Gastrocnemius medialis (tissue), 4 donors: ENCODE measurements at regions of chr19 and their contacts with region 1.

Region 1: GRCh38 chr19:47697863-47698609 is 15.2 kb upstream of the EHD2 start:
- DNase-seq: peak; percentile 64 to 80
- ATAC-seq: peak; percentile 74 to 91
- H3K4me3 ChIP-seq: no peak overlapping the region
- H3K27ac ChIP-seq: peak overlapping the region; percentile 78 to 85 (median 80)
- H3K4me1 ChIP-seq: peaks cover 4% of the 10 kb centered on the region in 2 donors
- H3K27me3 ChIP-seq: no peaks in the 10 kb centered on the region
- CTCF ChIP-seq: peak; percentile 96 to 98 (median 98)
- POLR2A ChIP-seq: no peak

Region 2: DNA sequence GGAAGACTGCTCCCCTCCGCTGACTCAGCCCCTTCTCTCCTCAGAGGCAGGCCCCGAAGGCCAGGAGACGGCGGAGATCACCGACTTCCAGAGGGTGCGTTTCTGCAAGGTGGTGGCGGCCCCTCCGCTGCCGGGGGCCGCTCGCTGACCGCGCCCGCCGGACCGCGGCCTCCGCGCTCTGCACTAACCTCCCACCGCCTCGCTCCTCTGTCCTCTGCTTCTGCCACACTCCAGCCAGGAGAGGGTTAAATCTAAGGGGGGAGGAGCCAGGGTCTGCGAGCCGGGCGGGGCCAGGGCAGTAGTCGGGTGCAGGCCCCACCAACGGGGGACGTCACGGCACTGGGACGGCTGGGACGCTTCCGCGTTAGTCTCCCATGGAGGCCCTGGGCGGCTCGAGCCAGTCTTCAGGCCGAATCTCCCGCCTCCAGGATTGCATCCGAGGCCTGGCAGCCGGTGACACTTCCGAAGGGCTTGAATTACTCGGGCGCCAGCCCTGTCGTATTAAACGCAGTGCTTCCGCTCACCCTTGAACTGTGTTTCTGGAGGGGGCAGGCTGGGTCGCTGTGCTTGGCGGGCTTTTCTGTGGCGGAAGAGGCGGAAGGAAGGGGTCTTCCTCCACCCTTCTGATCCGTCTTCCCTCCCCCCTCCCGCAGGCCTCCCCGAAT is 424.6 kb before region 1 on chr19:
- in situ Hi-C with region 1: no loop called
- intact Hi-C with region 1: loop called (anchors 10 kb)
- DNase-seq: peak; percentile 77 to 81
- ATAC-seq: peak; percentile 45 to 55
- H3K4me3 ChIP-seq: peak overlapping the region; percentile 60 to 74 (median 70)
- H3K27ac ChIP-seq: peak overlapping the region; percentile 88 to 95 (median 92)
- H3K4me1 ChIP-seq: peaks cover 15 to 35% of the 10 kb centered on the region in 2 donors
- H3K27me3 ChIP-seq: no peaks in the 10 kb centered on the region
- CTCF ChIP-seq: no peak
- POLR2A ChIP-seq: peak; percentile 55 to 70

Region 3: DNA sequence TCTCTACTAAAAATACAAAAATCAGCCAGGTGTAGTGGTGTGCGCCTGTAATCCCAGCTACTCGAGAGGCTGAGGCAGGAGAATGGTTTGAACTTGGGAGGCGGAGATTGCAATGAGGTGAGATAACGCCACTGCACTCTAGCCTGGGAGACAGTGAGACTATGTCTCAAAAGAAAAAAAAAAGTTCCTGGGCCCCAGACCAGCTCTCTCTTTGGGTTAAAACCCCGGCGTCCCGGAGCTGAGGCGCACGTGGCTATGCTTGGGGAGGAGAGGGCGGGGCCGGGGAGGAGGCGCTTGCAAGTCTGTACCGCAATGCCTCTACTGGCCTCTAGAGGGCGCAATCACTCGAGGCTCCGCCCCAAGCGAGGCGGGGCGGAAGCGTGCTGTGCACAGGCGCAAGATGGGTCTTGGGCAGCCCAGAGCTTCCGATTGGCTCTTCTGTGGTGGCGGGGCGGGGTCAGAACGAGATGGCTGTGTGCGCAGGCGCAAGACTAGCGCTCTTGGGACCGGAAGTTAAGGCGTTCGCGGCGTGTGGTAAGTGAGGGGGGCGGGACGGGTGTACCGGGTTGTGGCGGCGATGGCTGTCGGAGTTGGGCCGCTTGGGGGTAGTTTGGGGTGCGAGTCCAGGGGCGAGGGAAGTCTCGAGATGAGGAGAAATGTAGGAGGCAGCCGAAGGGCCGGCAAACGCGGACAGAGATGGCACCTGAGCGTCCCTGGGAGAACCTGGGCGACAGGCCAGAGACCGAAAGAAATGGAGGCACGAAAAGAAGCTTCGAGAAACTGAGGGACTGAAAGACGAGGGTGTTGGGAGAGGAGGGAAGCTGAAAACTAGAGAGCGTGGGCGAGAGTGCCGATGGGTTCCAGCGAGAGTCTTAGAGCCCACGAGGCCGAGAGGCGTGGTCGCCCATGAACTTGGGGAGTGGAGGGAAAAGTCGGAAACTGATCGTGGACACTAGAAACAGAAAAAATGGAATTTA is 348.9 kb before region 1 on chr19 and contains the start of gene DHX34:
- in situ Hi-C with region 1: no loop called
- intact Hi-C with region 1: loop called (anchors 5 kb)
- DNase-seq: peak; percentile 96 to 99
- ATAC-seq: peak; percentile 100
- H3K4me3 ChIP-seq: peak within 1 kb of the TSS; percentile 64 to 94 (median 82)
- H3K27ac ChIP-seq: peak within 1 kb of the TSS; percentile 79 to 82 (median 80)
- H3K4me1 ChIP-seq: peaks cover 10 to 18% of the 10 kb centered on the region in 2 donors
- H3K27me3 ChIP-seq: no peaks in the 10 kb centered on the region
- CTCF ChIP-seq: peak; percentile 97 to 100 (median 99)
- POLR2A ChIP-seq: peak; percentile 67 to 78
- total RNA-seq, gene DHX34: 14.3 to 19.3 (median 14.7) TPM

Region 4: GRCh38 chr19:47436712-47437401 is 261.2 kb before region 1 on chr19:
- in situ Hi-C with region 1: no loop called
- intact Hi-C with region 1: loop called (anchors 1 kb)
- DNase-seq: peak; percentile 51 to 74
- ATAC-seq: peak; percentile 92 to 96
- H3K4me3 ChIP-seq: no peak overlapping the region
- H3K27ac ChIP-seq: no peak overlapping the region
- H3K4me1 ChIP-seq: no peaks in the 10 kb centered on the region
- H3K27me3 ChIP-seq: peaks cover 15 to 34% (median 26%) of the 10 kb centered on the region in 3 donors
- CTCF ChIP-seq: peak; percentile 85 to 96 (median 93)
- POLR2A ChIP-seq: no peak

Region 5: DNA sequence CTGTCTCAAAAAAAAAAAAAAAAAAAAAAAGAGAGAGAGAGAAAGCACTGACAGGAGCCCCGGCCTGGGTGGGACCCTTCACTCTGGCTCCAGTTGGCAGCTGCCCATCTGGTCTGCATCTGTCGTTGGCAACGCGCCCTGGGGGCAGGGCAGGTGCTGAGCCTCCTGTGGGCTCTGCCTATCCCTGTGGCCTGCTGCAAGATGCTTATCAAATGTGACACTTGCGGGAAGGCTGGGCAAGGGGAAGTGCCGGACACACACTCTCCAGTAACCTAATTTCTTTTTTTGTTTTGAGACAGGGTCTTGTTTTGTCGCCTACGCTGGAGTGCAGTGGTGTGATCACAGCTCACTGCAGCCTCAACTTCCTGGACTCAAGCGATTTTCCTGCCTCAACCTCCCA is 203.3 kb before region 1 on chr19:
- in situ Hi-C with region 1: no loop called
- intact Hi-C with region 1: loop called (anchors 5 kb)
- DNase-seq: no peak
- ATAC-seq: no peak
- H3K4me3 ChIP-seq: no peak overlapping the region
- H3K27ac ChIP-seq: no peak overlapping the region
- H3K4me1 ChIP-seq: peaks cover 14 to 29% of the 10 kb centered on the region in 2 donors
- H3K27me3 ChIP-seq: no peaks in the 10 kb centered on the region
- CTCF ChIP-seq: no peak
- POLR2A ChIP-seq: no peak

Region 6: GRCh38 chr19:47600246-47601179 is 97.5 kb before region 1 on chr19:
- in situ Hi-C with region 1: loop called (anchors 5 to 10 kb)
- intact Hi-C with region 1: loop called (anchors 1 kb)
- DNase-seq: peak; percentile 99 to 100
- ATAC-seq: peak; percentile 96 to 97
- H3K4me3 ChIP-seq: peak overlapping the region; percentile 62 to 68 (median 63)
- H3K27ac ChIP-seq: peak overlapping the region; percentile 89 to 94 (median 92)
- H3K4me1 ChIP-seq: peaks cover 22 to 24% of the 10 kb centered on the region in 2 donors
- H3K27me3 ChIP-seq: no peaks in the 10 kb centered on the region
- CTCF ChIP-seq: peak in 2 of 5 experiments; percentile 10 to 34
- POLR2A ChIP-seq: peak; percentile 90 to 97

Region 7: GRCh38 chr19:47745010-47745901 is 47.2 kb after region 1 on chr19 and contains the start of gene NOP53:
- in situ Hi-C with region 1: no loop called
- intact Hi-C with region 1: loop called (anchors 1 kb)
- DNase-seq: peak; percentile 95 to 97
- ATAC-seq: peak; percentile 94
- H3K4me3 ChIP-seq: peak within 1 kb of the TSS; percentile 77 to 99 (median 92)
- H3K27ac ChIP-seq: peak within 1 kb of the TSS; percentile 92 to 99 (median 98)
- H3K4me1 ChIP-seq: peaks cover 22 to 33% of the 10 kb centered on the region in 2 donors
- H3K27me3 ChIP-seq: no peaks in the 10 kb centered on the region
- CTCF ChIP-seq: peak in 1 of 5 experiments; percentile 21
- POLR2A ChIP-seq: peak; percentile 77 to 79
- total RNA-seq, gene NOP53: 141 to 262 (median 150) TPM

Region 8: GRCh38 chr19:47891923-47892666 is 194.1 kb after region 1 on chr19:
- in situ Hi-C with region 1: no loop called
- intact Hi-C with region 1: no loop called
- DNase-seq: no peak
- ATAC-seq: no peak
- H3K4me3 ChIP-seq: no peak overlapping the region
- H3K27ac ChIP-seq: no peak overlapping the region
- H3K4me1 ChIP-seq: no peaks in the 10 kb centered on the region
- H3K27me3 ChIP-seq: no peaks in the 10 kb centered on the region
- CTCF ChIP-seq: no peak
- POLR2A ChIP-seq: no peak